ENCODE measurements at regions of chr2 and their contacts with region 1.

Region 1: DNA sequence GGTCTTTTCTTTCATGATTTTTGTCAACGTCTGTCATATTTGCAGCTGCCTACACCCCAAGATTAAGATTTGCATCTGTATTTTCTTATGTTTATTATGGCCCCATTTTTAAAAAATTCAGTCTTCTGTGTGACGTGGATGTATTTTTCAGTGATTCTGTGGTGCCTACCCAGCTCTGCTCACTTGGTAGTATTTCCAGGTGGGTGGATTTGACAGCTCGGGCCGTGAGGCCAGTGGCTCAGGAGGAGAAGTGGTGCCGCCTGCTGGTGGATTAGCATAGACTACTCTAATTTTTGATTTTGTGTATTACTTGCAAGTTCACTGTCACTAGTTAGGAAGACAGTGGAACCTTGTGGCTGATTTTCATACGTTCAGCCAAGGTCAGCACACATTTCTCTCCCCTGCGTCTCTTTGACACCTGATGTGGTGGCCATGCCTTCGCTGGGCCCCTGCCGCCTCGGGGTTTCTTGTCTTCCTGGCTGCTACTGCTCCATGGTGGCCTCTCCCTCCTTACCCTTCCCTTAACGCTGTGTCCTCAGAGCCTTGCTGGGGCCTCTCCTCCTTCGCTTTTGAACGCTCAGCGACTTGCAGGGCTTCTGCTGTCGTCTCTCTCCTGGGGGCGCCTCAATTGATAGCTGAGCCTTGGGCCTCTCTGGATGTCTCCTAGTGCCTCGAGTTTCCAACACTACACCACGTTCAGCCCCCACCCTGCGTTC is 89.3 kb downstream of the DGKD start:
- DNase-seq: peak; percentile 58
- ATAC-seq: peak; percentile 92
- H3K4me3 Mint-ChIP-seq: no peak overlapping the region
- H3K27ac Mint-ChIP-seq: peak overlapping the region; percentile 37
- H3K4me1 Mint-ChIP-seq: peaks cover 14% of the 10 kb centered on the region
- H3K27me3 Mint-ChIP-seq: no peaks in the 10 kb centered on the region
- CTCF ChIP-seq: peak; percentile 26

Region 2: DNA sequence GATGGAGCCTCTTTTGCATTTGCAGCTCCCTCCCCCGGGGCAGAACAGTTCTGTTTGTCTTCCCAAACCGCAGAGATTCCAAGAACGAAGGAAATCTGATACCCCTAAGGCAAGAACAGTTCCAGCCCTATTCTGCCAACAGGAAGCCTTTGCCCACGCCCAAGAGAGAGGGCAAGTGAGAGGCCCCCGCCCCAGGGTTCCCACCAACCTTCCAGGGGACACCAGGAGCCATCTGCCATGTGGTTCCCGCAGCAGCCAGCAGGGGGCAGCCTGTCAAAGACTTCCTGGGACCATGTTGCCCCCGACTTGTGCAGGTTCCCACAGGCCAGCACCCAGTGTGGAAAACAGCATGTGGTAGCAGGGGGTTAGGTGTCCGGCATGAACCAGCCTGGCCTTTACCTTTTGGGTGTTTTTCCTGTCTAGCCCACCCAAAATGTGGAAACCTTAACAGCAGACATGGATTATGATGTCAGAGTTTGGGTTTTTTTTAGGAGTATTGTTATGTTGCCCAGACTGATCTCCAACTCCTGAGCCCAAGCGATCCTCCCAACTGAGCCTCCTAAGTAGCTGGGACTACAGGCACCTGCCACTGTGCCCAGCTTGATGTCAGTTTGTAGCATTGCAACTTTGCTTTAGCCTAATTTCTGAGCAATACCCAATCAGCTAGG is 831.9 kb before region 1 on chr2:
- CTCF ChIA-PET with region 1: no interaction called
- POLR2A ChIA-PET with region 1: no interaction called
- intact Hi-C with region 1: loop called (anchors 1 kb)
- DNase-seq: peak; percentile 56
- ATAC-seq: peak; percentile 57
- H3K4me3 Mint-ChIP-seq: no peak overlapping the region
- H3K27ac Mint-ChIP-seq: no peak overlapping the region
- H3K4me1 Mint-ChIP-seq: no peaks in the 10 kb centered on the region
- H3K27me3 Mint-ChIP-seq: no peaks in the 10 kb centered on the region
- CTCF ChIP-seq: no peak

Region 3: DNA sequence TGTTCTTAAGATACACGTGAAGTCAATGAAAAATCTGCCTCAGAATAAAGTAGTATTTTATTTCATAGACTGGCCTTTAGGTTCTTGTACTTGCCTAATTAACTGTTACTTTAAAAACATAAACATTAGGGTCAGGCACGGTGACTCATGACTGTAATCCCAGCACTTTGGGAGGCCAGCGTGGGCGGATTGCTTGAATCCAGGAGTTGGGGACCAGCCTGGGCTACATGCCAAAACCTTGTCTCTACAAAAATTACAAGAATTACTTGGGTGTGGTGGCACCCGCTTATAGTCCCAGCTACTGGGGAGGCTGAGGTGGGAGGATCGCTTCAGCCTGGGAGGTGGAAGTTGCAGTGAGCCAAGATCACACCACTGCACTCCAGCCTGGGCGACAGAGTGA is 589.5 kb before region 1 on chr2:
- CTCF ChIA-PET with region 1: interaction called, 3 read pairs
- POLR2A ChIA-PET with region 1: no interaction called
- intact Hi-C with region 1: loop called (anchors 2 kb)
- DNase-seq: no peak
- ATAC-seq: no peak
- H3K4me3 Mint-ChIP-seq: no peak overlapping the region
- H3K27ac Mint-ChIP-seq: no peak overlapping the region
- H3K4me1 Mint-ChIP-seq: no peaks in the 10 kb centered on the region
- H3K27me3 Mint-ChIP-seq: no peaks in the 10 kb centered on the region
- CTCF ChIP-seq: no peak

Region 4: DNA sequence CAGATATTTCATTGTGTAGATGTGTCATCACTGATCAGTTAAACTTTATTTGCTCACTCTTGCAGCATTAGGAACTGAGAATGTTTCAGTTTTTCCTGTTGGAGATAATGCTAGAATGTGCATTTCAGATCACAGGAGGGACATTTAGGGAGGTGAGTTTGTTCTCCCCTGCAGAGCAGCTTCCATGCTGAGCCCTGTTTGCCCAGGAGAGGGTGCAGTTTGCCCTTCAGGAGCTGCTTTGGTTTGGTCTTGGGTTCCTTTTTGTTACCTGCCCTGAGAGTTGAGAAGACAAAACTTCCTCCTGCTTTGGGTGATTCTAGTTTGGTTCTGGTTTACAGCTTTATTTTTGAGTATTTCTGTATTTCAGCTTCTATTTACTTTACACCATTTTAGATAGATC is 39.4 kb before region 1 on chr2:
- CTCF ChIA-PET with region 1: interaction called, 210 read pairs
- POLR2A ChIA-PET with region 1: interaction called, 12 read pairs
- intact Hi-C with region 1: loop called (anchors 1 kb)
- DNase-seq: no peak
- ATAC-seq: peak; percentile 92
- H3K4me3 Mint-ChIP-seq: no peak overlapping the region
- H3K27ac Mint-ChIP-seq: peak overlapping the region; percentile 82
- H3K4me1 Mint-ChIP-seq: peaks cover 57% of the 10 kb centered on the region
- H3K27me3 Mint-ChIP-seq: no peaks in the 10 kb centered on the region
- CTCF ChIP-seq: no peak

Region 5: DNA sequence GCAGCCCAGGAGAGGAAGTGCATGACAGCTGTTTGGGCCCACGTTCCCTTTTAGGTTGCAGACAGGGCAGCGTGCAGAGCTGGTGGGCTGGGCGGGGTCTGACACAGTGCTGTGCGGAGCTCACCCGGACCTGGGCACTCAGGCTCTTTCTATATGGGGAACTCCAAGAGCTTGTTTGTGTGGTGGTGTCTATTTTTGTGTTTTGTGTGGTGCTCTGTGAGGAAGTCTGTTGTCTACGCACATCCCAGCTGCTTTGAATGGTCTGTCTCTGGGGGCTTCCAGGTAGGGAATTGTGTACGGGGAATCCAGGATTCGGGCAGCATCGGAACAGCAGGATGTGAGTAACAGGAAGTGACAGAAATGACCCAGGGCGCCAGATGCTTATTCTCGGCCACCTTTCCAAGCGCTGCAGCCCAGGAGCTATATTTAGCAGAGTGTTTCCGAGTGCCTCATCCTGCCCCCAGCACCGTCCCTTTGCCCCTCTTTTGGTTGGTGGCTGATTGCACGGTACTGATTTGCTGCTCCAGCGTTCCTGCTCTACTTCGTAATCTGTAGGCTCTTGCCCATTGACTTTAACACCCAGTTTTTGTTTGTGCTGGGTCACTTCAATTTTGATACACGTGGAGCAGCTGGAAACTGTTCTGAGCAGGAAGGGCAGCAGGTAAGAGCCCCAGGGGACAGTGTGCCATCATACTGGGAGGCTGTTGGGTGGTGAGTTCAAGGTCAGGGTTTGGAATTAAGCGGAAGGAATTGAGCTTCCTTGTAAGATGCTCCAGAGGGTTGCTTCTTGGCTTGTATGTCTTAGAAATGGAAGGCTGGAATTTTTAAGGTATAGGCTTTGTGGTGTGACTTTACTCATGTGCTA is 24.6 kb before region 1 on chr2:
- CTCF ChIA-PET with region 1: interaction called, 34 read pairs
- POLR2A ChIA-PET with region 1: interaction called, 18 read pairs
- intact Hi-C with region 1: loop called (anchors 1 kb)
- DNase-seq: peak; percentile 56
- ATAC-seq: peak; percentile 69
- H3K4me3 Mint-ChIP-seq: peak overlapping the region; percentile 87
- H3K27ac Mint-ChIP-seq: peak overlapping the region; percentile 97
- H3K4me1 Mint-ChIP-seq: peaks cover 99% of the 10 kb centered on the region
- H3K27me3 Mint-ChIP-seq: no peaks in the 10 kb centered on the region
- CTCF ChIP-seq: no peak

Region 6: DNA sequence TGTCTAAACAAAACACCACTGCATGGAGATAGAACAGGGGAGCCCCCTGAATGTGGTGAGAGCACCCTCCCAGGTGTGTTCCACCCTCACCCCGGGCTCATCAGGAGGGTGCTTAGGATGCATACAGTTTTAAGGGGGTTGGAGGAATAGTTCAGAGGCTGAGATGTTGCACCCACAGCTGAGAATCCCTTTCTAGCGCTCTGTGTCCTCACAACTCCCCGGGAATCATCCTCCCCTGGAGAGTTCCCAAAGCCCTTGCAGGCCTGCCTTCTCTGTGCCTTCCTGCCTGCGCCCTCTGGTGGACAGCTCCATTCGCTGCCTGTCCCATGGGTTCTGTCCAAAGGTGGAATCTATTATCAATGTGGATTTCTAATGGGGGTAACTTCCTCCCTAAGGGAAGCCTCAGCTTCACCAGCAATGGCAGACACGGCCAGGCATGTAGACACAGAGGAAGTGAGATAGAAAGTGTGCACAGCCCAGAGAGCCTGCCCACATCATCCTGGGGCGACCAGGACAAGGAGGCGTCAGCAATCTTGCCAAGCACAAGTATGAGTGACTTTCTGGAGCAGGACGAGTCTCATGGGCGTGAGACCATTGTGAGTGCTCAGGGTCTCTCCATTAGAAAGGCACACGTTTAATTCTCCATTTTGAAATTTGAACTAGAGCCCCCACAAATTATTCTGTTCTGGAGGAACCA is 267.8 kb after region 1 on chr2:
- CTCF ChIA-PET with region 1: interaction called, 3 read pairs
- POLR2A ChIA-PET with region 1: no interaction called
- intact Hi-C with region 1: loop called (anchors 2 kb)
- DNase-seq: peak; percentile 55
- ATAC-seq: peak; percentile 66
- H3K4me3 Mint-ChIP-seq: no peak overlapping the region
- H3K27ac Mint-ChIP-seq: no peak overlapping the region
- H3K4me1 Mint-ChIP-seq: peaks cover 4% of the 10 kb centered on the region
- H3K27me3 Mint-ChIP-seq: peaks cover 32% of the 10 kb centered on the region
- CTCF ChIP-seq: peak; percentile 75

Measured in activated B cell treated with CpG ODN at 0.5 μM for 24 hours (primary cell).